Activated T-helper 1 cell treated with anti-CD3 and anti-CD28 coated beads, Interleukin-12 subunit alpha, Interleukin-12 subunit beta, Interleukin-2, Interleukin-4 antibody, amounts not matched to agents 30 ng/mL and 10 ng/mL and 1 ng/mL, durations not matched to agents 14 hours and 24 hours and 36 hours (primary cell): ENCODE measurements at regions of chr3 and their contacts with region 1.

Region 1: GRCh38 chr3:17151598-17152373 is 267.0 kb downstream of the PLCL2 start:
- DNase-seq: peak; percentile 89
- H3K4me3 Mint-ChIP-seq: peak overlapping the region; percentile 60
- H3K27ac Mint-ChIP-seq: peak overlapping the region; percentile 85
- H3K4me1 Mint-ChIP-seq: peaks cover 45% of the 10 kb centered on the region
- H3K27me3 Mint-ChIP-seq: peaks cover 4% of the 10 kb centered on the region

Region 2: GRCh38 chr3:16290007-16290826 is 861.6 kb before region 1 on chr3:
- intact Hi-C with region 1: loop called (anchors 10 kb)
- DNase-seq: no peak
- H3K4me3 Mint-ChIP-seq: peak overlapping the region; percentile 91
- H3K27ac Mint-ChIP-seq: peak overlapping the region; percentile 80
- H3K4me1 Mint-ChIP-seq: peaks cover 80% of the 10 kb centered on the region
- H3K27me3 Mint-ChIP-seq: no peaks in the 10 kb centered on the region

Region 3: DNA sequence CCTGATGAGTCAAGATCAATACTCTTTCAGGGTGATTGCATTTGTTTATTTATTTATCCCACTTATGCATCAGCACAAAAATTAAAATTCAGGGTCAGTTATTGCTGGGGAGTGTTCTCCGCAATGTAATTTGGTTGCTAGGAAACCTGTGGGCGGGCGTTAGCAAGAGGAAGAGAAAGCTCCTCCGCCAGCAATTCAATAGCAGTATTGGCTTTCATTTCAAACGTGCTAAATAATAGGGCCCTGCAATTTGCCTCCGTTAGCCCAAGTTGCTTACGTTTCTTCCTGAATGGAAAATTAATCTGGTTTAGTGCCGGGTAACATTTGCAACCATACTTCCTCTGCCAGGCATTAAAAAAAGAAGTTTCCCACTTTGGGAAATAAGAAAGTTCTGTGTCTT is 302.6 kb before region 1 on chr3:
- intact Hi-C with region 1: loop called (anchors 2 kb)
- DNase-seq: peak; percentile 57
- H3K4me3 Mint-ChIP-seq: peak overlapping the region; percentile 48
- H3K27ac Mint-ChIP-seq: peak overlapping the region; percentile 56
- H3K4me1 Mint-ChIP-seq: peaks cover 32% of the 10 kb centered on the region
- H3K27me3 Mint-ChIP-seq: peaks cover 5% of the 10 kb centered on the region

Region 4: GRCh38 chr3:17023006-17023664 is 128.7 kb before region 1 on chr3:
- intact Hi-C with region 1: loop called (anchors 1 kb)
- DNase-seq: peak; percentile 61
- H3K4me3 Mint-ChIP-seq: peak overlapping the region; percentile 47
- H3K27ac Mint-ChIP-seq: peak overlapping the region; percentile 75
- H3K4me1 Mint-ChIP-seq: peaks cover 58% of the 10 kb centered on the region
- H3K27me3 Mint-ChIP-seq: no peaks in the 10 kb centered on the region

Region 5: DNA sequence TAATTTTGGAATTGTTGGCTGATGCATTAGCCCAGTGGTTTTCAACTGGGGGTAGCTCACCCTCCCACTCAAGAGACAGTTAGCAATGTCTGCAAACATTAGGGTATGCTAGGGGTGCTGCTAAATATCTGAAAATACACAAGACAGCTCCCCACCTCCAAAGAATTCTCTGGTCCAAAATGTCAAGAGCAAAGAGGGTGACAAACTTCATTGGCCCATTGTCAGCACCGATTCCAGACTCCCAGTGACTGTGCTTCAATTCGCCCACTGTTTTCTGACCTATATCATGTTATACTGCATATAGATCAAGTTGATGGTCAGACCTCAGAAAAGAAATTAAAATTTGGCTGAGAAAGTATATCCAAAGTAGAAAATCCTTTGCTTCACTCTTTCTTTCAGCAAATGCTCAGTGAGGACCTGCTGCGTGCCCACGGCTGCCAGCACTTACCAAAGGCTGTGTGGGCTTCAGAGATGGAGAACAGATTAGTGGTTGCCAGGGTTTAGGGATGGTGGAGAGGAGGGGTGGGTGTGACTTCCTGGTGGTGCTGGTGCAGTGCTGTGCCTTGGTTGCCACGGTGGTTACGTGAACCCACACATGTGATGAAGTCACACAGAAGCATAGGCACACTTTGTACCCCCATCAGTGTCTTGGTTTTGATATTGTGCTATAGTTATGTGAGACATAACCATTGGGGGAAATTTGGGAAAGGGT is 63.0 kb before region 1 on chr3:
- intact Hi-C with region 1: loop called (anchors 1 kb)
- DNase-seq: no peak
- H3K4me3 Mint-ChIP-seq: peak overlapping the region; percentile 27
- H3K27ac Mint-ChIP-seq: peak overlapping the region; percentile 25
- H3K4me1 Mint-ChIP-seq: peaks cover 39% of the 10 kb centered on the region
- H3K27me3 Mint-ChIP-seq: no peaks in the 10 kb centered on the region

Region 6: GRCh38 chr3:17233398-17233800 is 81.6 kb after region 1 on chr3:
- intact Hi-C with region 1: loop called (anchors 2 kb)
- DNase-seq: peak; percentile 27
- H3K4me3 Mint-ChIP-seq: no peak overlapping the region
- H3K27ac Mint-ChIP-seq: no peak overlapping the region
- H3K4me1 Mint-ChIP-seq: peaks cover 13% of the 10 kb centered on the region
- H3K27me3 Mint-ChIP-seq: no peaks in the 10 kb centered on the region